Naive thymus-derived CD4-positive, alpha-beta T cell (primary cell): ENCODE measurements at regions of chr22 and their contacts with region 1.

Region 1: DNA sequence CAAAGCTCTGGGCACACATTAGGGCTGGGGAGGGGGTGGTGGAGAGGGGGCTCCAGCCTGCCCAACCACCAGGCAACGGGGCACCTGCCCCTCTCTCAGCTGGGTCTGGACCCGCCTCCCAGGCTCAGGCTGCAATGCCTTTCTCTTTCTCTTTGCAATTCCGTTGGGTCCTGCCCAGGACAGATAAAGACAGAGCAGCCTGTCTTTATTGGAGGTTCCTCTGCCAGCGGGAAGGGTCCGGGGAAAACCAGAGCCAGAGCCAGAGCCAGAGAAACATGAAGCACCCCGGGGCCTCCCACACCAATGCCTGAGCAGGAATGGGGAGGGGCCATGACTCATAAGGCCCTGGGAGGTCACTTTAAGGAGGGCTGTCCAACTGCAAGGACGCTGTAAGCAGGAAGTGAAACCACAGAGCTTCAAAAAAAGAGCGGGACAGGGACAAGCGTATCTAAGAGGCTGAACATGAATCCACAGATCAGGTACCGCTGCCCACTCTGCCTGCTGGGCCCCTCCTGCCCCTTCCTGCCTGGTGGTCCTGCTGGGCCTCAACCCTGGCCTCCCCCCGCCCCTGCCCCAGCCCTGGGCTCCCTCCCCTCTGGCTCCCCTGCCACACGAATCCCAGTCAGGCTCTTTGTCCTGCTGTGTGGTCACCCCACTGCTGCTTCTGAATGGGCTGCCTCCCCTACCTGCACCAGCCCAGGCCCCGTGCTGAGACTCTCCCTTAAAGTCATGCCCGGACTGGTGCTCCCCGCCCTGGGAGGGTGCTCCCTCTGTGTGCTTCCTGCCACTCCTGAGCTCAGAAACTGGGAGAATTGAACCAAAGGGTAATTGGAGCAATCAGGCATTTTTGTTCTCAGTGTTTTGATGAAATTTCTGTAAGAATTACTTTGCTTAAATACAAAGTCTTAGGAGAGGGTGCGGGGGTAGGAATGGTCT is at the start of gene APOBEC3B:
- DNase-seq: peak in 7 of 9 donors; percentile 15 to 79 (median 28)
- ATAC-seq: peak; percentile 90
- H3K4me3 ChIP-seq: peak within 1 kb of the TSS; percentile 46
- H3K4me3 Mint-ChIP-seq: peak within 1 kb of the TSS; percentile 75 to 90 (median 86)
- H3K27ac ChIP-seq: no peak within 1 kb of the TSS
- H3K27ac Mint-ChIP-seq: peak within 1 kb of the TSS in 5 of 9 donors; percentile 12 to 98 (median 74)
- H3K4me1 ChIP-seq: peaks cover 0 to 8% of the 10 kb centered on the region in 2 donors
- H3K4me1 Mint-ChIP-seq: peaks cover 10 to 47% (median 12%) of the 10 kb centered on the region in 7 donors
- H3K27me3 ChIP-seq: no peaks in the 10 kb centered on the region
- H3K27me3 Mint-ChIP-seq: peaks cover 0 to 3% (median 0%) of the 10 kb centered on the region in 5 donors
- total RNA-seq, gene APOBEC3B: 0.30 to 16.0 (median 7.1) TPM in 4 of 5 experiments, not detected in the other

Region 2: DNA sequence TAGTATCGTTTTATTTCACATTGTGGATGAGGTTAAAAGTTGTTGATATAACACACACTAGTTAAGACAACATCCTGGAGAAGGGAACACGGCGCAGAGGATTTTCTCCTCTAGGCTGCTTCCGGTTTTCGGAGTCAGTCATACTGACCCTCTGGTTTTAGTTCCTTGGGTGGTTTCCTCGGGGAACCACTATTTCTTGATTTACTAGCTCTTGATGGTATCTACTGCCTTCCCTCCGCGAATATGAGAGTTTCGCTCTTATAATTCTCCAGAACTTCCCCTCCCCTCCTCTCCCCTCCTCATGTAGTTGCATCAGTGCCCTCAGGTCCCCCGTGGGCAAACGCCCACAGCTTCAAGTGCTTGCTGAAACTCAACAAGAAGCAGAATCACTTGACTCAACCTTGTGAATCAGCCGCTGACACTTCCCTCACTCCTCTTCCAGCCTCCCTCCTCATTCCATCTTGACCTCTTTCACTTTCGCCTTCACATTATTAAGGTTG is 40.7 kb before region 1 on chr22:
- CTCF ChIA-PET with region 1: no interaction called
- POLR2A ChIA-PET with region 1: no interaction called
- intact Hi-C with region 1: loop called in 1 of 2 experiments (anchors 1 kb)
- DNase-seq: peak in 1 of 9 donors; percentile 68
- ATAC-seq: peak; percentile 86
- H3K4me3 ChIP-seq: peak overlapping the region; percentile 38
- H3K4me3 Mint-ChIP-seq: peak overlapping the region in 9 of 10 donors; percentile 65 to 89 (median 77)
- H3K27ac ChIP-seq: no peak overlapping the region
- H3K27ac Mint-ChIP-seq: peak overlapping the region in 3 of 9 donors; percentile 5 to 89 (median 36)
- H3K4me1 ChIP-seq: peaks cover 9 to 10% of the 10 kb centered on the region in 2 donors
- H3K4me1 Mint-ChIP-seq: peaks cover 16 to 42% (median 22%) of the 10 kb centered on the region in 7 donors
- H3K27me3 ChIP-seq: peaks cover 0 to 6% of the 10 kb centered on the region in 2 donors
- H3K27me3 Mint-ChIP-seq: peaks cover 17 to 52% (median 42%) of the 10 kb centered on the region in 5 donors

Region 3: DNA sequence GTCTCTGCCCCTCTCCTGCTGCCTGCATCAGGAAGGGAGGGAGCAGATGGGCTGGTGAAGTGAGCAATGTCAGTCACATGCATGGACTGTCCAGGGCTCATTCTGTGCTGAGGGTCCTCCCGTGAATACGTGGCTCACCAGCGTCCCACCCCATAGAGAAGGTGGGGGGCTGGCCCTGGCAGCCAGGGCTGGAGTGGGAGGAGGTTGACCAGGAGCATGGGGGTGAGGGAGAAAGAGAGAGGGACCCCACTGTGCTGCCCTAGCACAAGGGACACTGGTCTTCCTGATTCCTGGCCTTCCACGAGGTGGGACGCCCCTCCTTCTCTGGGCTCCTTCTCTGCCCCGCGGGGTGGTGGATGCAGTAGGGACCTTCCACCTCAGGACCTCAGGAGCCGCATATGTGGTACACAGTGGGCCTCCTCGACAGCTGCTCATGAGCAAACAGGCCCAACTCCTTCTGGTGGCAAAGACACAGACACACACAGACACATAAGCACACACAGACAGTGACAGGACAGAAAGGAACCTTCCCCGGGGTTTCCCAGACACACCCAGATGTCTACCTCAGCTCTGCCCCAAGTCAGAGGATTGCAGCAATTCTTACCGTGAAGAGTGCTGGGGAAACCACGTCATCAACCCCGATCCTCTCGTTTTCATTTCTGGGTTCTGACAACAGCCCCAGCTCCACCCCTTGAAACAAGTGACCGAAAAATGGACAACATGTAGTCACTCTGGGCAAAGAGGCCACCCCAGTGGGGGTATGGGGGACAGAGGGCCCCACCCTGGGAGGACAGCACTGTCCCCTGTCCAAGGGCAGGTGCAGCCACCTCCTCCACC is 28.5 kb before region 1 on chr22:
- CTCF ChIA-PET with region 1: no interaction called
- POLR2A ChIA-PET with region 1: no interaction called
- intact Hi-C with region 1: loop called in 1 of 2 experiments (anchors 1 kb)
- DNase-seq: peak in 1 of 9 donors; percentile 74
- ATAC-seq: peak; percentile 89
- H3K4me3 ChIP-seq: no peak overlapping the region
- H3K4me3 Mint-ChIP-seq: peak overlapping the region in 1 of 10 donors; percentile 66
- H3K27ac ChIP-seq: no peak overlapping the region
- H3K27ac Mint-ChIP-seq: peak overlapping the region in 1 of 9 donors; percentile 96
- H3K4me1 ChIP-seq: no peaks in the 10 kb centered on the region
- H3K4me1 Mint-ChIP-seq: peaks cover 0 to 48% (median 0%) of the 10 kb centered on the region in 7 donors
- H3K27me3 ChIP-seq: no peaks in the 10 kb centered on the region
- H3K27me3 Mint-ChIP-seq: peaks cover 0 to 9% (median 0%) of the 10 kb centered on the region in 5 donors

Region 4: DNA sequence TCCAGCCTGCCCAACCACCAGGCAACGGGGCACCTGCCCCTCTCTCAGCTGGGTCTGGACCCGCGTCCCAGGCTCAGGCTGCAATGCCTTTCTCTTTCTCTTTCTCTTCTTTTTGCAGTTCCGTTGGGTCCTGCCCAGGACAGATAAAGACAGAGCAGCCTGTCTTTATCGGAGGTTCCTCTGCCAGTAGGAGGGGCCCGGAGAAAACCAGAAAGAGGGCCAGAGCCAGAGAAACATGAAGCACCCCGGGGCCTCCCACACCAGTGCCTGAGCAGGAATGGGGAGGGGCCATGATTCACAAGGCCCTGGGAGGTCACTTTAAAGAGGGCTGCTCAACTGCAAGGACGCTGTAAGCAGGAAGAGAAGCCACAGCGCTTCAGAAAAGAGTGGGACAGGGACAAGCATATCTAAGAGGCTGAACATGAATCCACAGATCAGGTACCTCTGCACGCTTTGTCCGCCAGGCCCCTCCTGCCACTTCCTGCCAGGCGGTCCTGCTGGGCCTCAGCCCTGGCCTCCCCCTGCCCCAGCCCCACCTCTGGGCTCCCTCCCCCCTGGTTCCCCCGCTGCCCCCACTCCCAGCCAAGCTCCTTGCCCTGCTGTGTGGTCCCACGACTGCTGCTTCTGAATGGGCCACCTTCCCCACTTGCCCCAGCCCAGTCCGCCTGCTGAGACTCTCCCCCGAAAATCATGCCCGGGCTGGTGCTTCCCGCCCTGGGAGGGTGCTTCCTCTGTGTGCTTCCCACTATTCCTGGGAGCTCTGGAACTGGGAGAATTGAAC is 31.9 kb after region 1 on chr22 and contains the start of gene APOBEC3C:
- CTCF ChIA-PET with region 1: no interaction called
- POLR2A ChIA-PET with region 1: no interaction called
- intact Hi-C with region 1: no loop called
- DNase-seq: peak; percentile 28 to 78 (median 59)
- ATAC-seq: peak; percentile 95
- H3K4me3 ChIP-seq: peak within 1 kb of the TSS; percentile 81
- H3K4me3 Mint-ChIP-seq: peak within 1 kb of the TSS; percentile 88 to 99 (median 94)
- H3K27ac ChIP-seq: peak within 1 kb of the TSS; percentile 87
- H3K27ac Mint-ChIP-seq: peak within 1 kb of the TSS; percentile 82 to 98 (median 95)
- H3K4me1 ChIP-seq: peaks cover 9 to 10% of the 10 kb centered on the region in 2 donors
- H3K4me1 Mint-ChIP-seq: peaks cover 12 to 51% (median 37%) of the 10 kb centered on the region in 7 donors
- H3K27me3 ChIP-seq: no peaks in the 10 kb centered on the region
- H3K27me3 Mint-ChIP-seq: no peaks in the 10 kb centered on the region
- total RNA-seq, gene APOBEC3C: 16.4 to 102 (median 20.5) TPM

Region 5: DNA sequence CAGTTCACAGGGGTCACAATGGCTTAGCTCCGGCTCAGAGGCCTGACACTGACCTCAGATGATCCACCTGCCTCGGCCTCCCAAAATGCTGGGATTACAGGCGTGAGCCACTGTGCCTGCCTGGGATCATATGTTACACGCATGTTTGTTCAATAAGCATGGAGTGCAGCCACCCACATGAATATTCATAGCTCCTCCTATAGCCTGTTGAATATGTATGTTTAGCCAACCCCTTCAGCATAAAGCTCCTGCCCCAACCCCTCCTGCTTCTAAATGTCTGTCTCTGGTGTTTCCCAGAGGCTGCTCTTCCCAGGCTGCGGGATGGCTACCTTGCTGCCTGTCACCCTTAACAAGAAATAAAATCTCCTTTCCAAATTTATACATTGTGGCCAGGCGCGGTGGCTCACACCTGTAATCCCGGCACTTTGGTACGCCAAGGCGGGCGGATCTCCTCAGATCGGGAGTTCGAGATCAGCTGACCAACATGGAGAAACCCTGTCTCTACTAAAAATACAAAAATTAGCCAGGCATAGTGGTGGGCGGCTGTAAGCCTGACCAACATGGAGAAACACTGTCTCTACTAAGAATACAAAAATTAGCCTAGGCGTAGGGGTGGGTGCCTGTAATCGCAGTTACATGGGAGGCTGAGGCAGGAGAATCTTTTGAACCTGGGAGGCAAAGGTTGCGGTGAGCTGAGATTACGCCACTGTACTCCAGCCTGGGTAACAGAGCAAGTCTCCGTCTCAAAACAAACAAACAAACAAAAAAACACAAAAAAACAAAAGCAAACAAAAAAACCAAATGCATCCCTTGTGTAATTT is 57.3 kb after region 1 on chr22:
- CTCF ChIA-PET with region 1: no interaction called
- POLR2A ChIA-PET with region 1: no interaction called
- intact Hi-C with region 1: no loop called
- DNase-seq: no peak
- ATAC-seq: no peak
- H3K4me3 ChIP-seq: no peak overlapping the region
- H3K4me3 Mint-ChIP-seq: peak overlapping the region; percentile 63 to 88 (median 79)
- H3K27ac ChIP-seq: peak overlapping the region; percentile 77
- H3K27ac Mint-ChIP-seq: peak overlapping the region; percentile 62 to 93 (median 82)
- H3K4me1 ChIP-seq: peaks cover 8 to 18% of the 10 kb centered on the region in 2 donors
- H3K4me1 Mint-ChIP-seq: peaks cover 24 to 48% (median 39%) of the 10 kb centered on the region in 7 donors
- H3K27me3 ChIP-seq: no peaks in the 10 kb centered on the region
- H3K27me3 Mint-ChIP-seq: no peaks in the 10 kb centered on the region

Region 6: DNA sequence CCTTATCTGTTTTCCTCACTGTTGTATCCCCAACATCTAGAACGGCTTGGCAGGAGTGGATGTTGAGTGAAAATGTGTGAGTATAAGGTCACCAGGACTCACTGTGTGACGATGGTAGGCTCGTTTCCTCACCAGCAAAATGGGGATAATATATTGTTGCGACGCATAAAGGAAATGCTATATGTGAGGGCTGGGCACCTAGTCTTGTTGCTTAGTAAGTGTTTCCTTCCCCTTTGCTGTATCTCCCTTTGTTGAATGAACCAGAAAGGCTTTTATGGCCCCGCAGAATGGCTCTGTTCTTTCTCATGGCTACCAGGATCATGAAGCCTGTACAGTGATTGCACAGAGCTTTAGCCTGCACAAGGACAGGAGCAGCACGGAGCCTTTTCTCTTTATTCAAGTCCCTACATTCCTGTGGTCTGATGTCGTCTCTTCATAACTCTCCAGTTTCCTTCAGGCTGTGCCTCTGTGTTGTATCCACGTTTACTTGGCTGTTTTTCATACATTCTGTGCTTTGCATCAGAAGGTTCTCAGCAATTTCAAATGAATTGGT is 1200.8 kb after region 1 on chr22:
- CTCF ChIA-PET with region 1: no interaction called
- POLR2A ChIA-PET with region 1: no interaction called
- intact Hi-C with region 1: no loop called
- DNase-seq: peak in 7 of 9 donors; percentile 20 to 48 (median 32)
- ATAC-seq: peak; percentile 83
- H3K4me3 ChIP-seq: peak overlapping the region; percentile 28
- H3K4me3 Mint-ChIP-seq: peak overlapping the region; percentile 67 to 87 (median 78)
- H3K27ac ChIP-seq: peak overlapping the region; percentile 59
- H3K27ac Mint-ChIP-seq: peak overlapping the region; percentile 65 to 95 (median 85)
- H3K4me1 ChIP-seq: peaks cover 21 to 53% of the 10 kb centered on the region in 2 donors
- H3K4me1 Mint-ChIP-seq: peaks cover 44 to 86% (median 75%) of the 10 kb centered on the region in 7 donors
- H3K27me3 ChIP-seq: no peaks in the 10 kb centered on the region
- H3K27me3 Mint-ChIP-seq: no peaks in the 10 kb centered on the region